ENCODE measurements at regions of chr4 and their contacts with region 1.

Region 1: GRCh38 chr4:125689805-125690204 is 375.1 kb downstream of the FAT4 start:
- DNase-seq: no peak
- H3K4me3 ChIP-seq: no peak overlapping the region
- H3K27ac ChIP-seq: no peak overlapping the region
- H3K4me1 ChIP-seq: no peaks in the 10 kb centered on the region
- H3K27me3 ChIP-seq: no peaks in the 10 kb centered on the region
- CTCF ChIP-seq: no peak
- EP300 ChIP-seq: no peak
- POLR2A ChIP-seq: no peak

Region 2: DNA sequence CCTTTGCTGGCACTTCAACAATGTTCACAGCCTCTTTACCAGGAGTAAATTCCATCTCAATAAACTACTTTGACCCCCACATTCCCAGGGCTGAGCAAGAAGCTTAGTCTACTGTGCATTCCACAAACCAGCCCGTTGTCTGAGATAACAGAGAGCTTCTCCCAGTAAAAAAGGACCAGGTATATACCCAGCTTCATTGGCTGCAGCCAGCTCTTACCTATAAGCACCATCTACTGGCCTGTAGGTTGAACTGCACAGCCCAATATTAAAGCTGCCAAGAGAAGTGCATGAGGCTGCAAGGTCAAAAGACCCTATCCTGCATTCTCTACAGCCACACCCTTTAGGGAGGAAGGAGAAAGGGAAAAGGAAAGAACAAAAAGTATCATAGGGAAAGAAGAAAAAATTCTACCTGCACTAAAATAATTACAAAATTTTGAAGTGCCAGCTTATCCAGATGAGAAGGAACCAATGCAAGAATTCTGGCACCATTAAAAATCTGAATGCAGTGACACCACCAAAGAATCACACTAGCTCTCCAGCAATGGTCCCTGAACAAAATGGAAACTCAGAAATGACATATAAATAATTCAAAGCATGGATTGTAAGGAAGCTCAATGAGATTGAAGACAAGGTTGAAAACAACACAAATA is 1897.2 kb after region 1 on chr4:
- in situ Hi-C with region 1: no loop called
- intact Hi-C with region 1: loop called (anchors 5 kb)
- DNase-seq: no peak
- H3K4me3 ChIP-seq: no peak overlapping the region
- H3K27ac ChIP-seq: no peak overlapping the region
- H3K4me1 ChIP-seq: no peaks in the 10 kb centered on the region
- H3K27me3 ChIP-seq: no peaks in the 10 kb centered on the region
- CTCF ChIP-seq: peak; percentile 34 to 59 (median 52)
- EP300 ChIP-seq: no peak
- POLR2A ChIP-seq: no peak